Right cardiac atrium (tissue), 5 donors: ENCODE measurements at regions of chr16 and their contacts with region 1.

Region 1: GRCh38 chr16:15434425-15435215 is at the start of gene BMERB1:
- DNase-seq: peak; percentile 86 to 94 (median 93)
- ATAC-seq: peak; percentile 96 to 97
- H3K4me3 ChIP-seq: peak within 1 kb of the TSS; percentile 69
- H3K27ac ChIP-seq: peak within 1 kb of the TSS; percentile 22
- H3K4me1 ChIP-seq: peaks cover 2% of the 10 kb centered on the region
- H3K27me3 ChIP-seq: no peaks in the 10 kb centered on the region
- total RNA-seq, gene BMERB1: 54.7 to 74.7 (median 60.8) TPM

Region 2: GRCh38 chr16:15650019-15650697 is 215.5 kb after region 1 on chr16 and contains the start of gene NDE1:
- intact Hi-C with region 1: loop called in 1 of 4 experiments (anchors 5 kb)
- DNase-seq: peak; percentile 92 to 97 (median 97)
- ATAC-seq: peak; percentile 99 to 100
- H3K4me3 ChIP-seq: peak within 1 kb of the TSS; percentile 93
- H3K27ac ChIP-seq: peak within 1 kb of the TSS; percentile 92
- H3K4me1 ChIP-seq: peaks cover 2% of the 10 kb centered on the region
- H3K27me3 ChIP-seq: no peaks in the 10 kb centered on the region
- total RNA-seq, gene NDE1: 14.9 to 23.9 (median 17.8) TPM